ENCODE measurements at regions of chr5 and their contacts with region 1.

Region 1: GRCh38 chr5:80399526-80400239 is 8.2 kb upstream of the ZFYVE16 start:
- DNase-seq: no peak
- H3K4me3 ChIP-seq: no peak overlapping the region
- H3K27ac ChIP-seq: no peak overlapping the region
- H3K4me1 ChIP-seq: no peaks in the 10 kb centered on the region
- H3K27me3 ChIP-seq: no peaks in the 10 kb centered on the region
- CTCF ChIP-seq: no peak

Region 2: DNA sequence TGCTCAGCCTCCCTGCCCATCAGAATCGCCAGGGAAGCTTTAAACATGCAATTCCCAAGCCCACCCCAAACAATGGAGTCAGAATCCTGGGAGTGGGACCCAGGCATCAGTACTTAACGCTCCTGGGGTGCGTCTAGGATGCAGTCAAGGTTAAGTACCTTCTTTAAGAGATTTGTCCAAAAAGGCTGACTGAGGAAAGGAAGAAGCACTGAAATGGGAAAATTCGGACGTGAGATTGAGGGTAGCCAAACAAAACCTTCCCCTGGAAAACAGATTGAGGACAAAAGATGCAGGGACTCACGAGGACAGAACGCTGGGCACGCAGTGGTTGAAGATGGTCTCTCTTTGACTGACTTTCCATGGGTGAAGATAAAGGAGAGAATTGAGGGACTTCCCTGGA is 552.1 kb before region 1 on chr5:
- CTCF ChIA-PET with region 1: no interaction called
- POLR2A ChIA-PET with region 1: interaction called, 11 read pairs
- intact Hi-C with region 1: no loop called
- DNase-seq: no peak
- H3K4me3 ChIP-seq: no peak overlapping the region
- H3K27ac ChIP-seq: no peak overlapping the region
- H3K4me1 ChIP-seq: no peaks in the 10 kb centered on the region
- H3K27me3 ChIP-seq: peaks cover 5% of the 10 kb centered on the region
- CTCF ChIP-seq: no peak

Region 3: GRCh38 chr5:80318212-80318611 is 81.5 kb before region 1 on chr5:
- CTCF ChIA-PET with region 1: no interaction called
- POLR2A ChIA-PET with region 1: no interaction called
- intact Hi-C with region 1: no loop called
- DNase-seq: peak; percentile 56
- H3K4me3 ChIP-seq: no peak overlapping the region
- H3K27ac ChIP-seq: no peak overlapping the region
- H3K4me1 ChIP-seq: peaks cover 6% of the 10 kb centered on the region
- H3K27me3 ChIP-seq: peaks cover 4% of the 10 kb centered on the region
- CTCF ChIP-seq: no peak

Measured in A673 (cell line).